RWPE1 (cell line): ENCODE measurements at regions of chr10 and their contacts with region 1.

Region 1: DNA sequence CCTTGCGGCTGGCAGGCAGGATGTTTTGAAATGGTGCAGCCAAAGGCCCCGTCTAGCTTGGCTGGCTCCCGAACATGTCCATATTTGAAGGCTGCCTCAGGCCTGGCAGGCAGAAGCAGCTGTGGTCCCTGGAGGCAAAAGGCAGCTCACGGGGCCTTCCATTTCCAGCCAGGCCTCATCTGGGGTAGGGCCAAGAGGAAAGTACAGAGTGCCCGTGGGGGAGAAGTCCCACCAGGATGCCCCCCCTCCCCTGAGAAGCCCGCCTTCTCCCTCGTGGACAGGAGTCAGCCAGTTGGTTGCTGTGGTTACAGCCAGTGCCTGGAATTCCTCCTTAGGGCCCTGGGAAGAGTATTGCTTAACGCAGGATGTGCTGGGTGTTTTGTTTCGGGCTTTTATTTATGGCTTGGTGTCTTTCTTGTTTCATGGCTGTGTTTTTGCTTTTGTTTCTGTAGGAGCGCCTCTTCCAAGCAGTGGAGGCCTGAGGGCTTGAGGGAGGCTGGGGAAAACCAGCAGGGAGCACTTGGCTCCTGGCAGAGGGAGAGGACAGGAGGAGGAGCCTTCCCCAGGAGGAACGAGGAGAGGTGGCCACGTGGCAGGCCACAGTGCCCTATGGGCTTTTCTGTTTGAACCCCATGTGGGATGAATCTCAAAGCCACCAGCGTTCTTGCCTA is 45.4 kb downstream of the CHST3 start:
- DNase-seq: peak; percentile 93
- H3K27ac ChIP-seq: peak overlapping the region; percentile 100
- CTCF ChIP-seq: no peak

Region 2: DNA sequence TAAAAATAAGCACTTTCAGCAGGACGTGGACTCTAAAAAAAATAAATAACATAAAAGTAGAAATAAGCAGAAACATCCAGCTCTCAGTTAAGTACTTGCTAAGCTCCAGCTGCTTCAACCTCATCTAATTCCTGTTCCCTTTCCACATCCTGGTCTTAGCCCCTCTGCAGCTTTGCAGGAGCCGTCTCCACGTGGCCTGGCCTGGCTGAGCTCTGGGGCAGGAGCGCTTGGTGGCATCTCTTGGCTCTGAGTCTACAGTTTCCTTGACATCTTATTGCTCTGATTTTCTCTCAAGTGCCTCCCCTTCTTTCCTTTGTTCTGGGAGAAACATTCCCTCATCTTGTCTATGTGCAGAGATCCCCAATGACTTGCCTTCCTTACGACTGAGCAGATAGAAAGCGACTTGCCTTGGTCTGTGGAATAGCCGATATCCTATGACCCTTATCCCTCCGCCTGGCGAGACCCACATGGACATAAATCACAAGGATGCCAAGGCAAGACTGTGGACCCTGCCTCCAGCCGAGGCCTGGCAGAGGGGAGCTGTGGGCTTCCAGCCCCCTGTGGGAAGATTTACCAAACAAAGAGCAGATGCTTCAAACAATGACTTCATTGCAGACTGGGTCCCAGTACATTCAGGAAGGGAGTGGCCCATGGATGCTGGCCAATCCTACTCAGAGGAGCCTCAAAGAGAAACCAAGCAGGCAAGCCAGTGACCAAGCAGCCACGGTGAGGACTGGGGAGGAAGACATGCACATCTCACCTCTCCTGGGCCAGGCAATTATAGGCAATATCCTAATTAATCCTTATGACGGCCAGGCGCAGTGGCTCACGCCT is 16.9 kb after region 1 on chr10:
- CTCF ChIA-PET with region 1: interaction called, 10 read pairs
- POLR2A ChIA-PET with region 1: no interaction called
- DNase-seq: peak; percentile 51
- H3K27ac ChIP-seq: peak overlapping the region; percentile 78
- CTCF ChIP-seq: no peak

Region 3: GRCh38 chr10:72048450-72049124 is 39.0 kb after region 1 on chr10:
- CTCF ChIA-PET with region 1: interaction called, 12 read pairs
- POLR2A ChIA-PET with region 1: no interaction called
- DNase-seq: peak; percentile 95
- H3K27ac ChIP-seq: peak overlapping the region; percentile 40
- CTCF ChIP-seq: peak; percentile 99

Region 4: DNA sequence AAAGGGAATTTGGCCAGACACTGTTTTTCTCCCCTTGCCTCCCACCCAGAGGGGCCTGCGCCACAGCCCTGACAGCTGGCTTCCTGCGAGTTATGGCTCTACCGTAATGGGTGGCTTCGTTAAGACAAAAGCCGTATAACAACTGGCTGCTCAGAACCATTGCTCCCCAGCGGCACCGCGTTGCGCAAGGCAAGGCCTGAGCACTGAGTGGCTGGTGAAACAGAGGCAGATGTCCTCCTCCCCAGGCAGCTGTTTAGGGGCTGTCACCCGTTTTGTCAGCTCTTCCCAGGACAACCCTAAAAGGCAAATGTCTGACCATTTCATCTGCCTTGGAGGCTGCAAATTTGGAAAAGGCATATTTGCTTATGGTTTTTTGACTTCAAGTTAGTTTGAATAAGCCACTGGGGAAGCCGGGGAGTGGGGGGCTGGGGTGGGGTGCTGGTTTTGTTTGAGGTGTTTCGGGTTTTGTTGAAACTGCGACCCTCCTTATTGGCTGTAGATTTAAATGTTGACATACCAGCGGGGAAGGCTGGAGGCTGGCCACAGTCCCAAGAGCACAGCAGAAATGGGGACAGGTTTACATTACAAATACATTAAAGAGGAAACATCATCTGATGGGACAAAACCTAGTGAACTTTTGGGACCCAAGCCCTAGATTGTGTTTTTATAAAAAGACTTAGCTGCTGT is 79.5 kb after region 1 on chr10:
- CTCF ChIA-PET with region 1: no interaction called
- POLR2A ChIA-PET with region 1: no interaction called
- DNase-seq: no peak
- H3K27ac ChIP-seq: no peak overlapping the region
- CTCF ChIP-seq: no peak